Lower leg skin (tissue), 4 donors: ENCODE measurements at regions of chr20 and their contacts with region 1.

Region 1: DNA sequence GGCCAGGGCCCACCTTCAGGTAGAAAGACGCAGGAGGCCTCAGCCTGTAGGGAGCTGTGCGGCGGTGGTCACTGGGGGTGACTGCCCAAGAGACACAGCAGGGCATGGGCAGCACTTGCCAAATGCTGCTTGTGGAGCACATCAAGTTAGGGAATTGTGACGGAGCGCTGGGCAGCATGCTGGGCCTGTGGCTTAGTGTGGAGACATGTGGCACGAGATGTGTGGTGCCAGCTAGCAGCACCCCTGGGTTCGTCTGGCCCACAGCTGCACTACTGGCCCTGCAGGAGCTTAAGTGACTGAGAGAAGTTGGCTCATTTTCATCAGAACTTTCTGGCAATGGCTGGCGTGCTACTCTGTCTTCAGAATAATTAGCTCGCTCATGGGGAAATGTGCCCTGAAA is 213.1 kb upstream of the SYNDIG1 start:
- DNase-seq: no peak
- H3K4me3 ChIP-seq: no peak overlapping the region
- CTCF ChIP-seq: no peak
- POLR2A ChIP-seq: no peak

Region 2: GRCh38 chr20:23753589-23753988 is 502.7 kb before region 1 on chr20:
- intact Hi-C with region 1: no loop called
- DNase-seq: no peak
- H3K4me3 ChIP-seq: no peak overlapping the region
- CTCF ChIP-seq: no peak
- POLR2A ChIP-seq: no peak

Region 3: GRCh38 chr20:24235296-24236175 is 20.8 kb before region 1 on chr20:
- intact Hi-C with region 1: loop called (anchors 1 kb)
- DNase-seq: no peak
- H3K4me3 ChIP-seq: no peak overlapping the region
- CTCF ChIP-seq: no peak
- POLR2A ChIP-seq: no peak